ENCODE measurements at regions of chr18 and their contacts with region 1.

Region 1: GRCh38 chr18:79988451-79989194 is at the start of gene TXNL4A:
- DNase-seq: peak in 9 of 10 donors; percentile 78 to 91 (median 84)
- ATAC-seq: peak; percentile 90 to 93
- H3K4me3 Mint-ChIP-seq: peak within 1 kb of the TSS; percentile 84 to 97 (median 93)
- H3K27ac Mint-ChIP-seq: peak within 1 kb of the TSS; percentile 92 to 98 (median 97)
- H3K4me1 Mint-ChIP-seq: peaks cover 16 to 43% (median 39%) of the 10 kb centered on the region in 4 donors
- H3K27me3 Mint-ChIP-seq: no peaks in the 10 kb centered on the region
- polyA plus RNA-seq, gene TXNL4A: 213 to 225 (median 217) TPM

Region 2: DNA sequence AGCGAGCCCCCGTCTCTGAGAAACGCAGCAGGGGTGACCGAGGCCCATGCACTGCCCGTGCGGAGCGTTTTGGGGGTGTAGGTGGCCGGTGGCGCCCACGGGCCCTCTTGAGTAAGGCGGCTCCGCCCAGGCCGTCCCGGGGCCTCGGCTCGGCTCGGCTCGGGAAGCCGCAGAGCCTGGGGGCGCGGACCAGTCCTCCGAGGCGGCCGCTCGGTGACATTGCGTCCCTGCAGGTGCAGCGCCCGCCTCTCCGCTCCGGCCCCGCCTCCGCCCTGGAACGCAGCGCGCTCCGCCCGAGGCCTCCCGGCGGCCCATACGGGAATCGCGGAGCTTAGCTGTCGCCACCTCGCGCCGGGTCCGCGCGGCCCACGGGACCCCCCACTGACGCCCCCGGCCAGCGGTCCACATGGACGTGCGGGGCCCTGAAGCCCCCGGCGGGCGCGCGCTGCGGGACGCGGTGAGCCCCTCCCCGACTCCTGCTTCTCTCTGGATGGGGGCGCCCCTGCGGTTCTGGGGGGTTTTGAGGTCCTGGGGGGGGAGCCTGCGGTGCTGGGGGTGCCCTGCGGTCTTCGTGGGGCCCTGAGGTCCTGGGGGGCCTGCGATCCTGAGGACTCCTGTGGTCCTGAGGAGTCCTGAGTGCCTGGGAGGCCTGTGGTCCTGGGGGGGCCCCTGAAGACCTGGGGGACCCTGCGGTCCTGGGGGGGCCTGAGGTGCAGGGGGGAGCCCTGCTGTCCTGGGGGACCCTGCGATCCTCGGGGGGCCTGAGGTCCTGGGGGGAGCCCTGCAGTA is 24.1 kb before region 1 on chr18 and contains the start of gene HSBP1L1:
- POLR2A ChIA-PET with region 1: interaction called, 10 read pairs
- DNase-seq: peak; percentile 59 to 83 (median 69)
- ATAC-seq: peak; percentile 85 to 94
- H3K4me3 Mint-ChIP-seq: peak within 1 kb of the TSS; percentile 81 to 94 (median 88)
- H3K27ac Mint-ChIP-seq: peak within 1 kb of the TSS; percentile 92 to 98 (median 96)
- H3K4me1 Mint-ChIP-seq: peaks cover 9 to 41% (median 35%) of the 10 kb centered on the region in 4 donors
- H3K27me3 Mint-ChIP-seq: no peaks in the 10 kb centered on the region
- polyA plus RNA-seq, gene HSBP1L1: 11.2 to 24.5 (median 16.0) TPM

Region 3: DNA sequence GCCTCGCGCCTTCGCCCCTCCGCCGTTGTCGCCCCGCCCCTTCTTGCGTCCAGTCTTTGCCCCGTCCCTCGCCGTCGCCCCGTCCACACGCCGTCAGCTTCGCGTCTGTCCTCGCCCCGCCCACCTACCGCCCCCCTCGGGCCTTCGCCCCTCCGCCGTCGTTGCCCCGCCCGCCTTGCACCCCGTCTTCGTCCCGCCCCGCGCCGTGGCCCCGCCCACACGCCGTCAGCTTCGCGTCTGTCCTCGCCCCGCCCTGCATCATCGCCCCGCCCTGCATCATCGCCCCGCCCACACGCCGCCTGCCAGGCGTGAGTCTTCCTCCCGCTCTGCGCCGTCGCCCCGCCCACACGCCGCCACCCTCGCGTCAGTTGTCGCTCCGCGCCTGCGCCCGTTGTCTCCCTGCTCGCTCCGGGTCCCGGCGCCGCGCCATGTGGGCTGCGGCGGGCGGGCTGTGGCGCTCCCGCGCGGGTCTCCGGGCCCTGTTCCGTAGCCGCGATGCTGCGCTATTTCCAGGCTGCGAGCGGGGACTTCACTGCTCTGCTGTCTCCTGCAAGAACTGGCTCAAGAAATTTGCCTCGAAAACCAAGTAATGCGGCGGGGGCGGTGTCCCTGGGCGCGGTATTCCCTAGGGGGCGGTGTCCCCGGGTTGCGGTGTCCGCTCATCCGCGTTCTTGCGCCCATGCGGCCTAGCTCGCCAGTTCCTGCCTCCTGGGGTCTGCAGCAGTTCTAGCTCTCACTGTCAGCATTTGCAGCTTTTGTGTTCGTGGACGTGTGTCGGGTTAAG is 45.6 kb after region 1 on chr18 and contains the start of gene RBFA:
- POLR2A ChIA-PET with region 1: interaction called, 21 read pairs
- DNase-seq: peak; percentile 92 to 100 (median 99)
- ATAC-seq: peak; percentile 70
- H3K4me3 Mint-ChIP-seq: peak within 1 kb of the TSS; percentile 85 to 97 (median 92)
- H3K27ac Mint-ChIP-seq: peak within 1 kb of the TSS; percentile 88 to 99 (median 94)
- H3K4me1 Mint-ChIP-seq: peaks cover 22 to 29% (median 28%) of the 10 kb centered on the region in 4 donors
- H3K27me3 Mint-ChIP-seq: no peaks in the 10 kb centered on the region
- polyA plus RNA-seq, gene RBFA: 14.8 to 15.4 (median 15.1) TPM